ENCODE measurements at regions of chr7 and their contacts with region 1.

Region 1: GRCh38 chr7:118870187-118870586 is 645.7 kb downstream of the ANKRD7 start:
- DNase-seq: no peak
- ATAC-seq: no peak
- H3K4me3 ChIP-seq: no peak overlapping the region
- H3K4me3 Mint-ChIP-seq: no peak overlapping the region
- H3K27ac ChIP-seq: no peak overlapping the region
- H3K27ac Mint-ChIP-seq: no peak overlapping the region
- H3K4me1 ChIP-seq: no peaks in the 10 kb centered on the region
- H3K4me1 Mint-ChIP-seq: no peaks in the 10 kb centered on the region
- H3K27me3 ChIP-seq: no peaks in the 10 kb centered on the region
- H3K27me3 Mint-ChIP-seq: no peaks in the 10 kb centered on the region

Region 2: GRCh38 chr7:118755067-118755625 is 115.0 kb before region 1 on chr7:
- CTCF ChIA-PET with region 1: no interaction called
- POLR2A ChIA-PET with region 1: no interaction called
- DNase-seq: no peak
- ATAC-seq: no peak
- H3K4me3 ChIP-seq: no peak overlapping the region
- H3K4me3 Mint-ChIP-seq: no peak overlapping the region
- H3K27ac ChIP-seq: no peak overlapping the region
- H3K27ac Mint-ChIP-seq: no peak overlapping the region
- H3K4me1 ChIP-seq: no peaks in the 10 kb centered on the region
- H3K4me1 Mint-ChIP-seq: no peaks in the 10 kb centered on the region
- H3K27me3 ChIP-seq: no peaks in the 10 kb centered on the region
- H3K27me3 Mint-ChIP-seq: no peaks in the 10 kb centered on the region

Region 3: DNA sequence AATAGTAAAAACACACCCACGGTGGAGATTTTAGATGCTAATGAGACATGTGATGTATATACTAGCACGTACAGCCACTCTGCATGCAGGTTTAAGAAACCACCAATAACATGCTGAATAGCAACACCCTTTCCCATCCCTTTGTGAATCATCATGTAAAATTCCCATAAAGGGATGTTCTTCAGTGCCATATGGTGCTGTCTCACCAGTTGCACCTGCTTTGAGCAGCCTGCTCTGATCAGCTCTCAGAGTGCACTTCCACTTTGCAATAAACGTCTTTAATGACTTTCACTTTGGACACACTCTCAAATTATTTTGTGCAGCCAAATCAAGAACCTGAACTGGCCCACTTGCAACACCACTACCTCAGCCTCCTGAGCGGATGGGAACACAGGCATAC is 30.7 kb before region 1 on chr7:
- CTCF ChIA-PET with region 1: no interaction called
- POLR2A ChIA-PET with region 1: interaction called in 1 of 2 experiments, 10 read pairs
- DNase-seq: no peak
- ATAC-seq: no peak
- H3K4me3 ChIP-seq: no peak overlapping the region
- H3K4me3 Mint-ChIP-seq: no peak overlapping the region
- H3K27ac ChIP-seq: no peak overlapping the region
- H3K27ac Mint-ChIP-seq: no peak overlapping the region
- H3K4me1 ChIP-seq: no peaks in the 10 kb centered on the region
- H3K4me1 Mint-ChIP-seq: no peaks in the 10 kb centered on the region
- H3K27me3 ChIP-seq: no peaks in the 10 kb centered on the region
- H3K27me3 Mint-ChIP-seq: no peaks in the 10 kb centered on the region

Measured in T-cell (primary cell).